ENCODE measurements at regions of chr18 and their contacts with region 1.

Region 1: DNA sequence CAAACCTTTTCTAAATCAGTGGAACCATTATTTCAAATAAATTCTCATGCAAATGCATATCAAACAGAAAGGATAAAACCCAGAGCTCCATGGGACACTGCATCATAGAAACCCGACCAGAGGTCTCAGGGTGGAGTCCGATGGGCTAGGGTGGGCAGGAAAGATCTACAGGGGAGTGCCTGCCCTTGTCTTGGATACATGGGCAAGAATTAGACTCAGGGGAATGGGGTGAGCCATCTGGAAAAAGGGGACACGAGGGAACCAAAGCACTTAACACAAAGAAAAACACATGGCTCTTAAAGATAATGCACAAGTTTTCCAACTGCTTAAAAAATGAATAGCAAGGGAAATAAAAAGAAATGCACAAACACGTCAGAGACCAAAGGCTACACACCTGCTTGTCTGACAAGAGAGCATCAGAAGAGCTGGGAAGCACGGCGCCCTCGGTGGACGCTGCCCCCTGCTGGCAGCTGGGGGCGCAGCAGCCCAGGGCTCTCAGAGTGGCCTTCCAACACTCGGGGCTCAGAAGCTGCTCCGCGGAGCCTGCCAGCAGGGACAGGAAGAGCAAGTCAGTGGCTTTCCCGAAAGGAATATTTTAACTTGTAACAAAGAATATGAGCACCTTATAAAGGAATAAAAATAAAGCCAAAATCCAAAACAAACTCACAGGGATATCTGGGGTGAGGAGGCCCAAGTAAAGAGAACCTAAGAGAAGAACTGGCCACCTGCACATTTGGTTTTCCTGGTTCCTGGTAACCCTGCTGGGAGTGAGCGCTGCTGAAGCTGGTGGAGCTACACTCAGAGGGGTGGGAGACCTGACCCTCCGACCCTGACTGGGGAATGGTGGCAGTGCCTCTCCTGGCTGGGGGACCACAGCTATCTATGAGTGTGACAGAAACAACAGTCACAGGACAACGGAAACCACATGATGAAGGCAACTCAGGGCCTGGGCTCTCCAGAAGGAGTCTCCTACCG is 54.5 kb downstream of the SIGLEC15 start:
- DNase-seq: peak; percentile 72
- H3K4me3 ChIP-seq: peak overlapping the region in 1 of 2 experiments; percentile 30; a peak in 1 of 4 replicates
- H3K27ac ChIP-seq: no peak overlapping the region
- H3K4me1 ChIP-seq: no peaks in the 10 kb centered on the region; a peak in 1 of 4 replicates
- H3K27me3 ChIP-seq: no peaks in the 10 kb centered on the region
- CTCF ChIP-seq: peak; percentile 99
- EP300 ChIP-seq: no peak
- RAD21 ChIP-seq: peak; percentile 79

Region 2: DNA sequence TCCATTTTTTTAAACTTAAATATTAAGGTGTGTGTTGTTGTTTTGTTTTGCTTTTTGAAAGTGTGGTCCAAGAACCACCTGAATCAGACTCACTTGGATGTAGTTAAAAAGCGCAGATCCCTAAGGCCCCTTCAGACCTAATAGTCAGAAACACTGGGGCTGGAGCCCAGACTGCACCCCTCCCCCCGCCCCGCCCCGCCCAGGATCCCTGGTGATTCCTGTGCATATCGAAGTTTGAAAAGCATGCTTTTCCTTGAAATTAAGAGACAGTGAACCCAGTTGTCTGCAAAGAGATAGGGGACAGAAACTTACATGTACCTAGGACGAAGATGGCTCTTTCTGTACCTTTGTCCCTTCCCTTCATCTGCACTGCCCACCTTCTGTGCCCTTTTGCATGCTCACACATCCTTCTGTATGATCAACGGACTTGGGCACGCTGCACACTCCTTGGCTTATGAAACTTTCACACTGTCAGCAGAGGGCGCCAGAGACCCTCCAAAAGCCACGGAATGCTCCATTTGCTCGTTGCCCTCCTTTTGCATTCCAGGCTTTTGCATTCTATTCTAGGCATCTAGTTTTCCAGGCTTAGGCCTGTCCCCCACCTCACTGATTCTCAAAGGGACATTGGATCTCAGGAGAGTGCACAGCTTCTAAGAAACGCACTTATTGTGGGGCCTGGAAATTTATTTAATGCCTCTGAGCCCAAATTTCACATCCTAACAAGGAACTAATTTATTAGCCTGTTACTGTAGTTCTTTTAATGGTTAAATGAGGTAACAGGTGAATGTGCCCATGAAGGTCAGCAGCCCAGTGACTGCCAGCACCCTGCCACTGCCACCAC is 188.8 kb before region 1 on chr18:
- CTCF ChIA-PET with region 1: interaction called, 58 read pairs
- POLR2A ChIA-PET with region 1: no interaction called
- DNase-seq: peak; percentile 69
- H3K4me3 ChIP-seq: no peak overlapping the region; a peak in 1 of 4 replicates
- H3K27ac ChIP-seq: no peak overlapping the region
- H3K4me1 ChIP-seq: no peaks in the 10 kb centered on the region; a peak in 1 of 4 replicates
- H3K27me3 ChIP-seq: no peaks in the 10 kb centered on the region
- CTCF ChIP-seq: peak; percentile 90
- EP300 ChIP-seq: no peak
- RAD21 ChIP-seq: peak; percentile 96

Region 3: GRCh38 chr18:45860971-45861370 is 19.0 kb before region 1 on chr18:
- CTCF ChIA-PET with region 1: interaction called, 13 read pairs
- POLR2A ChIA-PET with region 1: no interaction called
- DNase-seq: no peak
- H3K4me3 ChIP-seq: no peak overlapping the region
- H3K27ac ChIP-seq: peak overlapping the region in 1 of 2 experiments; percentile 27; a peak in 1 of 4 replicates
- H3K4me1 ChIP-seq: no peaks in the 10 kb centered on the region
- H3K27me3 ChIP-seq: no peaks in the 10 kb centered on the region
- CTCF ChIP-seq: no peak
- EP300 ChIP-seq: no peak
- RAD21 ChIP-seq: no peak

Region 4: GRCh38 chr18:45910405-45911023 is 30.5 kb after region 1 on chr18:
- CTCF ChIA-PET with region 1: interaction called, 21 read pairs
- POLR2A ChIA-PET with region 1: no interaction called
- DNase-seq: peak; percentile 65
- H3K4me3 ChIP-seq: no peak overlapping the region
- H3K27ac ChIP-seq: no peak overlapping the region
- H3K4me1 ChIP-seq: no peaks in the 10 kb centered on the region
- H3K27me3 ChIP-seq: no peaks in the 10 kb centered on the region
- CTCF ChIP-seq: peak; percentile 86
- EP300 ChIP-seq: no peak
- RAD21 ChIP-seq: peak; percentile 69